Right ventricle myocardium superior (tissue), 1 donor: ENCODE measurements at regions of chr6 and their contacts with region 1.

Region 1: DNA sequence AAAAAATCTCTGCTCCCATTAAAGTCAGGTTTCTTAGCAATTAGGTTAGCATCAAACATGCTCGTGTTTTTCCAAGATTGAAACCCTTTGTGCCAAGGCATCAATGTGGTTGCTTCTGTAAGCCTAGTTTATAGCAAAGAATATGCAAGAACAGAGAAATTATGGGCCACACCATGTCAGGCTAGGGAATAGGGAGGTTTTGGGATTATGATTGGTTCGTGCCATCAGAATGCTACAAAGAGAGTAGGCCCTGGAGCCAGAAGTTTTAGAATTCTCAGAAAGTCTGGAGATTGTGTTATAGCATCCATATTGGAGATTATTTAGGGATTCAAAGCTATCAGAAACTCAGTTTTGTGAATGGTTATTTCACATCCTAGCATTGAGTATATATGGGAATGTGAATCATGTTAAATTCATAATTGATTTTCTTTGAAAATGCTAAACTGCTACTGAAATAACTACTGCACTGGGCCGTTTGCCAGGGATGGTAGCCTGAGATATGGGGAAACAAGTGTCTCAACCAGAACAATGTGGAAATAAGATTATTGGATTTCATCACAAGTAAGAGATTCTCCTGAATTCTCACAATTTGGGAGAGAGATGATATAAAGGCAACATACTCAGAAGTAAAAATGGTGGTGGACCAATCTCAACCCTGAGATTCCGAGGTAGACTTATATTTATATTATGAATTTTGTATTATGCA is 45.3 kb downstream of the ZNF292 start:
- DNase-seq: peak; percentile 51
- ATAC-seq: no peak

Region 2: GRCh38 chr6:87099472-87099871 is 101.2 kb before region 1 on chr6:
- intact Hi-C with region 1: no loop called
- DNase-seq: no peak
- ATAC-seq: no peak

Region 3: GRCh38 chr6:87164004-87164403 is 36.6 kb before region 1 on chr6:
- intact Hi-C with region 1: loop called (anchors 5 kb)
- DNase-seq: no peak
- ATAC-seq: no peak

Region 4: DNA sequence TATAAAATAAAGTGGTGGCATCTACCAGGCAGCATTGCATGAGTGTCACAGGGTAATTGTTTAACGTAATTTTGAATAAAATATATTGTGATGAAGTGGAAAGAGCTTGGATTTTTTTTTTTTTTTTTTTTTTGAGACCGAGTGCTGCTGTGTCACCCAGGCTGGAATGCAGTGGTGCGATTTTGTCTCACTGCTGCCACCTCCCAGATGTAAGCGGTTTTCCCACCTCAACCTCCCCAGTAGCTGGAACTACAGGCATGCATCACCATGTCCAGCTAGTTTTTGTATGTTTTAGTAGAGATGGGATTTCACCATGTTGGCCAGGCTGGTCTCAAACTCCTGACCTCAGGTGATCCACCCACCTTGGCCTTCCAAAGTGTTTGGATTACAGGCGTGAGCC is 40.7 kb after region 1 on chr6:
- intact Hi-C with region 1: no loop called
- DNase-seq: no peak
- ATAC-seq: no peak